Transverse colon (tissue), 4 donors: ENCODE measurements at regions of chr1 and their contacts with region 1.

Region 1: GRCh38 chr1:204128964-204129896 is 22.6 kb downstream of the ETNK2 start:
- DNase-seq: peak; percentile 73
- H3K4me3 ChIP-seq: peak overlapping the region in 3 of 4 donors; percentile 20 to 36 (median 23)
- H3K27ac ChIP-seq: peak overlapping the region in 2 of 4 donors; percentile 57 to 68
- H3K4me1 ChIP-seq: peaks cover 11 to 32% (median 17%) of the 10 kb centered on the region in 4 donors
- H3K27me3 ChIP-seq: no peaks in the 10 kb centered on the region
- CTCF ChIP-seq: peak; percentile 89 to 97 (median 94)
- EP300 ChIP-seq: no peak
- POLR2A ChIP-seq: no peak

Region 2: GRCh38 chr1:203861379-203862184 is 267.6 kb before region 1 on chr1 and contains the start of gene SNRPE:
- in situ Hi-C with region 1: loop called in 3 of 4 experiments (anchors 5 kb)
- intact Hi-C with region 1: loop called (anchors 2 kb)
- DNase-seq: peak; percentile 97
- H3K4me3 ChIP-seq: peak within 1 kb of the TSS; percentile 71 to 97 (median 80)
- H3K27ac ChIP-seq: peak within 1 kb of the TSS; percentile 72 to 89 (median 80)
- H3K4me1 ChIP-seq: peaks cover 13 to 27% (median 17%) of the 10 kb centered on the region in 4 donors
- H3K27me3 ChIP-seq: no peaks in the 10 kb centered on the region
- CTCF ChIP-seq: peak; percentile 85 to 98 (median 93)
- EP300 ChIP-seq: no peak
- POLR2A ChIP-seq: peak; percentile 52
- total RNA-seq, gene SNRPE: 3.0 to 30.2 (median 24.0) TPM in 3 of 4 donors, not detected in the other

Region 3: GRCh38 chr1:203871107-203871875 is 257.9 kb before region 1 on chr1:
- in situ Hi-C with region 1: loop called in 3 of 4 experiments (anchors 5 kb)
- intact Hi-C with region 1: loop called (anchors 2 kb)
- DNase-seq: peak; percentile 13
- H3K4me3 ChIP-seq: no peak overlapping the region
- H3K27ac ChIP-seq: peak overlapping the region; percentile 37 to 68 (median 65)
- H3K4me1 ChIP-seq: peaks cover 0 to 13% (median 0%) of the 10 kb centered on the region in 4 donors
- H3K27me3 ChIP-seq: no peaks in the 10 kb centered on the region
- CTCF ChIP-seq: peak; percentile 69 to 95 (median 78)
- EP300 ChIP-seq: no peak
- POLR2A ChIP-seq: no peak

Region 4: GRCh38 chr1:204072931-204073836 is 56.0 kb before region 1 on chr1 and contains the start of gene SOX13:
- in situ Hi-C with region 1: loop called in 2 of 4 experiments (anchors 5 to 10 kb)
- intact Hi-C with region 1: loop called (anchors 5 kb)
- DNase-seq: peak; percentile 92
- H3K4me3 ChIP-seq: peak within 1 kb of the TSS; percentile 65 to 74 (median 67)
- H3K27ac ChIP-seq: peak within 1 kb of the TSS; percentile 88 to 98 (median 94)
- H3K4me1 ChIP-seq: peaks cover 7 to 41% (median 30%) of the 10 kb centered on the region in 4 donors
- H3K27me3 ChIP-seq: peaks cover 4% of the 10 kb centered on the region
- CTCF ChIP-seq: peak in 1 of 5 experiments; percentile 48
- EP300 ChIP-seq: no peak
- POLR2A ChIP-seq: peak; percentile 96
- total RNA-seq, gene SOX13: 12.1 to 34.1 (median 33.4) TPM

Region 5: GRCh38 chr1:204341380-204341779 is 212.2 kb after region 1 on chr1:
- in situ Hi-C with region 1: no loop called
- intact Hi-C with region 1: no loop called
- DNase-seq: peak; percentile 59
- H3K4me3 ChIP-seq: no peak overlapping the region
- H3K27ac ChIP-seq: peak overlapping the region; percentile 55 to 76 (median 74)
- H3K4me1 ChIP-seq: peaks cover 33 to 76% (median 55%) of the 10 kb centered on the region in 4 donors
- H3K27me3 ChIP-seq: no peaks in the 10 kb centered on the region
- CTCF ChIP-seq: no peak
- EP300 ChIP-seq: no peak
- POLR2A ChIP-seq: no peak